ENCODE measurements at regions of chr12 and their contacts with region 1.

Region 1: GRCh38 chr12:8078398-8078797 is 3.7 kb upstream of the NECAP1 start:
- DNase-seq: peak in 1 of 2 experiments; percentile 68
- ATAC-seq: no peak
- H3K4me3 ChIP-seq: no peak overlapping the region
- H3K27ac ChIP-seq: no peak overlapping the region
- H3K4me1 ChIP-seq: peaks cover 27% of the 10 kb centered on the region
- CTCF ChIP-seq: peak; percentile 37; the same call in 2 of the 3 replicates
- EP300 ChIP-seq: no peak
- POLR2A ChIP-seq: no peak
- RAD21 ChIP-seq: peak; percentile 51 to 53; a peak in 4 of 5 replicates

Region 2: GRCh38 chr12:8038659-8039114 is 39.7 kb before region 1 on chr12:
- CTCF ChIA-PET with region 1: interaction called, 70 read pairs
- POLR2A ChIA-PET with region 1: no interaction called
- DNase-seq: peak in 1 of 2 experiments; percentile 18
- ATAC-seq: peak; percentile 36 to 69; a peak in 3 of 6 replicates
- H3K4me3 ChIP-seq: no peak overlapping the region
- H3K27ac ChIP-seq: no peak overlapping the region
- H3K4me1 ChIP-seq: peaks cover 22% of the 10 kb centered on the region
- CTCF ChIP-seq: no peak
- EP300 ChIP-seq: no peak
- POLR2A ChIP-seq: no peak
- RAD21 ChIP-seq: no peak

Region 3: DNA sequence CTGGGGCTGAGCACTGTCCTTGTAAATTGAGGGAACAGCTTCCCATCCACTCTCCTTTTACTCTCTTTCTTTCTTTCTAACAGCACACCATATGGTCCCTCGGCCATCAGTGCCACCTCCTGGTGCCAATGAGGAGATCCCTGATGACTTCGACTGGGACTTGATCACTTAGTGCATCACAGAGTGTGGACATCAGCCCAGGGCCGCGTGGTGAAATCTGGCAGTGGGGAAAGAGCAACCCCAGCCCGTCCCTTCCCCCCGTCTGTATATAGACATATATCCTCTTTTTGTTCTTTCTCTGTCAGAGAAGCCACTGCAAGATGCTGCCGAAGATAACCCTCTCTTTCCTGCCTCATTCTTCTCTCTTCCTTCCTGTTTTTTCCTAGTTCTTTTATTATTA is 25.7 kb before region 1 on chr12:
- CTCF ChIA-PET with region 1: interaction called, 70 read pairs
- POLR2A ChIA-PET with region 1: no interaction called
- DNase-seq: no peak
- ATAC-seq: no peak
- H3K4me3 ChIP-seq: no peak overlapping the region
- H3K27ac ChIP-seq: no peak overlapping the region
- H3K4me1 ChIP-seq: no peaks in the 10 kb centered on the region
- CTCF ChIP-seq: no peak
- EP300 ChIP-seq: no peak
- POLR2A ChIP-seq: no peak
- RAD21 ChIP-seq: no peak

Measured in A549 (cell line).